ENCODE measurements at regions of chr20 and their contacts with region 1.

Region 1: DNA sequence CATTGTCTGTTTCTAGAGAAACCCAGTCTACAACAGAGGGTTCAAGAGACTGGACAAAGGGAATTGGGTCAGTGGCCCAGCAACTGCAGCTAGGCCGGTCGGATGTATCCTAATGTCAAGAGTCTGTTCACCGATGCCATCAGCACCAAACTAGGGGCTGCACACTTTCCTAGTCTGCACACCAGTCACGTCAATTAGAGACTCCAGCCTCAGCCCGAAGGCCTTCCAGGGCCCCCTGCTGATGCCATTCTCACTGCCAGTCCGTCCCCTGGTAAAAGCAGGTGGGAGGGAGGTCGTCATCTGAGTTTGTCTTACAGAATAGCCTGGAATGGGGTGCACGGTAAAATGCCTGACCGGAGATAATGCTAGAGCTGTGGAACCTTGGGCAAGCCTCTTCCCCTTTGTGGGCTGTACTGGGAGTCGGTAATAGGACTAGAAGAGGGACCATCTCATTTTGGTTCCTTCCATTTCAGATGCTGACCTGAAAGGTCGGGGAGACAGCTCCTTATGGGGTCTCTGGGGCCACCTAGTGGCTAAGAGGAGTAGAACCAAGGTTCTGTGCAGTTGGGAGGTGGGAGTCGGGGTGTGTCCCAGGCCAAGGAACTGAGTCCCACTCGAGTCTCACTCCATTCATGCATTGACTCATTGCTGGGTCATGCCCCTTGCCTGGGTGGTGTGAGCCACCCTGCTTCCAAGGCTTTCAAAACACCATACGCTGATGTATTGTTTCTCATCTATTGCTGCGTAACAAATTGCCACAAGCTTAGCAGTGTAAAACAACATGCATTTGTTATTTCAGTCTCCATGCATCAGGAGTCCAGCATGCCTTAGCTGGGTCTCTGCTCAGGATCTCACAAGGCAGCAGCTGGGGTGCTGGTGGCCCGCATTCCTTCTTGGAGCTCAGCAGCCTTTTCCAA is 5.1 kb downstream of the SOX12 start:
- DNase-seq: peak; percentile 54 to 56
- H3K4me3 ChIP-seq: no peak overlapping the region
- H3K27ac ChIP-seq: no peak overlapping the region
- H3K4me1 ChIP-seq: peaks cover 9% of the 10 kb centered on the region; the same call in 1 of the 2 replicates
- H3K27me3 ChIP-seq: no peaks in the 10 kb centered on the region
- CTCF ChIP-seq: peak; percentile 90

Region 2: DNA sequence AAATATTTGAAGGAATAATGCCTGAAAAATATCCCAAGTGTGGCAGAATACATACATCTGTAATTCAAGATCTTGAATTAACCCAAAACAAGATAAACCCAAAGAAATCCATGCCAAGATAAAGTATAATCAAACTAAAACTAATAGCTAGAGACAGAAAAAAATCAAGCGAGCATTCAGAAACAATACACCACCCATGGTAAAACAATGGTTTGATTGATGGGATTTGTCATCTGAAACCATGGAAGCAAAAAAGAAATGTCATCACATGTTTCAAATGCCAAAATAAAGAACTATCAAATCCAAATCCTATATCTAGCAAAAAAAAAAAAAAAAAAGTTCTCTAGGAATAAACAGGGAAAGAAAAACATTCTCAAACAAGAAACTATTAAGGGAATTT is 178.4 kb before region 1 on chr20:
- CTCF ChIA-PET with region 1: no interaction called
- POLR2A ChIA-PET with region 1: no interaction called
- intact Hi-C with region 1: no loop called
- DNase-seq: no peak
- H3K4me3 ChIP-seq: no peak overlapping the region
- H3K27ac ChIP-seq: no peak overlapping the region
- H3K4me1 ChIP-seq: no peaks in the 10 kb centered on the region
- H3K27me3 ChIP-seq: peaks cover 68% of the 10 kb centered on the region
- CTCF ChIP-seq: no peak

Region 3: GRCh38 chr20:258963-259362 is 71.5 kb before region 1 on chr20:
- CTCF ChIA-PET with region 1: no interaction called
- POLR2A ChIA-PET with region 1: no interaction called
- intact Hi-C with region 1: loop called (anchors 10 kb)
- DNase-seq: peak in 1 of 2 experiments; percentile 8
- H3K4me3 ChIP-seq: no peak overlapping the region
- H3K27ac ChIP-seq: no peak overlapping the region
- H3K4me1 ChIP-seq: no peaks in the 10 kb centered on the region
- H3K27me3 ChIP-seq: peaks cover 79% of the 10 kb centered on the region
- CTCF ChIP-seq: no peak

Region 4: GRCh38 chr20:346640-347316 is 16.3 kb after region 1 on chr20 and contains the start of gene NRSN2:
- CTCF ChIA-PET with region 1: no interaction called
- POLR2A ChIA-PET with region 1: interaction called, 10 read pairs
- intact Hi-C with region 1: no loop called
- DNase-seq: peak in 1 of 2 experiments; percentile 38
- H3K4me3 ChIP-seq: peak within 1 kb of the TSS; percentile 59
- H3K27ac ChIP-seq: no peak within 1 kb of the TSS
- H3K4me1 ChIP-seq: no peaks in the 10 kb centered on the region
- H3K27me3 ChIP-seq: no peaks in the 10 kb centered on the region
- CTCF ChIP-seq: no peak
- total RNA-seq, gene NRSN2: 15.0 and 16.5 TPM in 2 replicates

Region 5: GRCh38 chr20:371755-372542 is 41.5 kb after region 1 on chr20:
- CTCF ChIA-PET with region 1: no interaction called
- POLR2A ChIA-PET with region 1: no interaction called
- intact Hi-C with region 1: no loop called
- DNase-seq: peak; percentile 88 to 96
- H3K4me3 ChIP-seq: no peak overlapping the region
- H3K27ac ChIP-seq: peak overlapping the region; percentile 96
- H3K4me1 ChIP-seq: peaks cover 98% of the 10 kb centered on the region
- H3K27me3 ChIP-seq: no peaks in the 10 kb centered on the region
- CTCF ChIP-seq: no peak

Measured in PC-9 (cell line).